ENCODE measurements at regions of chr12 and their contacts with region 1.

Region 1: DNA sequence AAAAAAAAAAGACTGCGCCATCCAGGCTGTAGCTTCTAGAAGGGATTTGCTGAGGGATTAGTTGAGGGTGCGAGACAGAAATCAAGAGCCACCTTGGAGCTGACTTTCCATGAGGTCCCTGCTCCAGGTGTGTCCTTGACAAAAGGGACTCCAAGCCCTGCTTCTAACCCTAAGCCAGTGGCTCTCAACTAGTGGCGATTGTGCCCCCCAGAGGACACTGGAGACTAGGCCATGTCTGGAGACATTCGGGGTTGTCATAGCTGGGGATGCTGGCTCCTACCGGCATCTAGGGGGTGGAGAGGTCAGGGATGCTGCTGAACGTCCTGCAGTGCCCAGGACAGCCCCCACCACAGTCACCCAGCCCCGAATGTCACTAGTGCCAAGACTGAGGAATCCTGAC is 40.6 kb downstream of the SPRING1 start:
- DNase-seq: no peak
- H3K4me3 ChIP-seq: no peak overlapping the region
- H3K27ac ChIP-seq: no peak overlapping the region
- H3K4me1 ChIP-seq: peaks cover 0 to 43% (median 17%) of the 10 kb centered on the region in 6 donors
- H3K27me3 ChIP-seq: peaks cover 0 to 45% (median 17%) of the 10 kb centered on the region in 7 donors
- CTCF ChIP-seq: no peak
- POLR2A ChIP-seq: no peak

Region 2: DNA sequence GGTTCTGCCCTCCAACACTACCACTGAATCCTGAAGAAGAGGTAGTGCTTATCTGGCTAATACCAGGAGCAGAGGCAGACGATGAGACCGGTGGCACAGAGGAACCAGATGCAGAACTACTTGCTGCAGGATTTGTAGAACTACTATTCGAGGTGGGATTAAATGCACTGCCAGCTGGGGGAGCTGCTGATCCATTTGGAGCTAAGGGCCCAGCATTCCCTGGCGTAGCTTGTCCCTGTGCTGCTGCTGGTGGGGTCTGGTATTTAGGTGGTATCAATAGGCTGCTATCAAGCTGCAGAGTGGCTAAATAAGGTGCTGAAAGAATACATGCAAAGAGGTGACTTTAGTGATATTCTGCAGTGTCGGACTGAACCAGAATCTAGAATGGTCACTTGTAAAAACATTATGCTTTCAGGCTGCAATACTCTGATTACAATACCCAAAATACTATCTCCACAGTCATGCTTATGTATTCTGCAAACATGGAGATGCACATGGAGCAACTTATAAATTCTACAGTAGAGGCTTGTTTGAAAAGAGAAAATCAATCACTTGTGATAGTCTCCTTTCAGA is 714.0 kb before region 1 on chr12:
- intact Hi-C with region 1: loop called (anchors 10 kb)
- DNase-seq: no peak
- H3K4me3 ChIP-seq: no peak overlapping the region
- H3K27ac ChIP-seq: no peak overlapping the region
- H3K4me1 ChIP-seq: peaks cover 2 to 8% (median 4%) of the 10 kb centered on the region in 6 donors
- H3K27me3 ChIP-seq: no peaks in the 10 kb centered on the region
- CTCF ChIP-seq: no peak
- POLR2A ChIP-seq: no peak

Measured in spleen (tissue), 13 donors.